Activated CD8-positive, alpha-beta T cell treated with anti-CD3 and anti-CD28 coated beads, Interleukin-2, amount 10 ng/mL, durations not matched to agents 7 days and 5 days (primary cell): ENCODE measurements at regions of chr2 and their contacts with region 1.

Region 1: DNA sequence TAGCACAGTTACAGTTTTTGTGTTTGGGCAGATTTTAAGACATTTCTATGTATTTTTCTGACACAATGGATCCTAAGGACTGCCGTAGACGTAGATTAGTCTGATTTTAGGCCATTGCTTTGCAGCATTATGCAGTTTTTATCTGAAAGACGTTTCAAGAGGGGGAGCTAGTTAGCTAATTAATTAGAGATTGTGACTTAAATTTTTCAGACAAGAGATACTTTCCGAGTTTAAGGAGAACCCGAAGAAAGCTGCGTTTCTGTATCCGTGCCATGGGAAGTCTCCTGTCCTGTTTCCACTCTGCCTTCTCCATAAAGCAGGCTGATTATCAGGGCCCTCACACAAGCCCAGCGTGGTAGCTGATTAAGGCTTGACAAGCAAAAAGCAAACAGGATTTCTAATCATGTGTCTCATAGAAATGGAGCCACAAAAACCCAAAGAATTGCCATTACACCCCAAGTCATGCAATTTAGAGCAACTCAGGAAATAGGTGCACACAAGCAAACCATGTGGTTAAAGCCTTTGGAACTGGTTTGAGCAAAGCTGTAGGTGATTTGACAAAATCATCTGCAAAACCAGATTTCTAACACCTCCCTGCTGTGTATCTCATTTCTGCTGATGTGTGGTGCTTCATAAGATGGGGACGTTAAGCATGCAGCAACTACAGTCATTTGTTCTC is 808.1 kb downstream of the RNF144A start:
- DNase-seq: peak; percentile 80
- ATAC-seq: peak; percentile 83
- H3K4me3 Mint-ChIP-seq: peak overlapping the region; percentile 76
- H3K27ac Mint-ChIP-seq: peak overlapping the region; percentile 86
- H3K4me1 Mint-ChIP-seq: peaks cover 60% of the 10 kb centered on the region
- H3K27me3 Mint-ChIP-seq: no peaks in the 10 kb centered on the region

Region 2: DNA sequence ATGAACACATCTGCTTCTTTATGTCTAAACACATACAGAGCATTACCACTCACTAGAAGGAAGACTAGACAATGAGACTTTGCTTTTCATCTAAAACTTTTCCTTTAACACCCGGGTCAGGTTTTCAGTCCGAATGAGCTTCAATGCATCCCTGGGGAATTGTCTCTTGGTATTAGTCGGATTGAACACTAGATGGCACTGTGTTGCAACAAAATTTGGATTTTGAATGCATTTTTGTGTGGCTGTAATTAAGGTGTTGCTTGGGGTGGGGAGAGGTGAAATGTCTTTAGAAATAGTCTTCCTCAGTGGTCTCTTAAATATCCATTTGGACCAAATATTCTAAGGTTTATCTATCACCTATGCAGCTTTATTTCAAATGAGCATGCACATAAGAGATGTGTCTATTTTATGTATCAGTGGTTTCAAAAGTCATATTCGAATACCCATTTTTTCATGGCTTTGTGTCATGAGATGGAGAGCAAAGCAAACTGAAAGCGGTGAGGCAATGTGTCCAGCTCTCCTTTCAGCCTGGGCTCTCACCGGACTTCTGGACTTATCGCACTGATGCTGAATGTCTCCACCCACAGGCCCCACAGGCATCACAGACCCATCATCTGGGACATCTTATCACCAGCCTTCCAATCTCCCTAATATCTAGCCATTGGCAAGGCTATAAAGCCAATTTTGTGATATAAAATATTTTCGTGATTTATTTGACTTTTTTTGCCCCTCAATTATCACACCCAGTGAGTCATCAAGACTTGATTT is 297.8 kb before region 1 on chr2:
- CTCF ChIA-PET with region 1: interaction called, 44 read pairs
- POLR2A ChIA-PET with region 1: interaction called, 40 read pairs
- DNase-seq: peak; percentile 59
- ATAC-seq: no peak
- H3K4me3 Mint-ChIP-seq: no peak overlapping the region
- H3K27ac Mint-ChIP-seq: peak overlapping the region; percentile 68
- H3K4me1 Mint-ChIP-seq: peaks cover 46% of the 10 kb centered on the region
- H3K27me3 Mint-ChIP-seq: no peaks in the 10 kb centered on the region

Region 3: GRCh38 chr2:7450188-7450832 is 275.0 kb before region 1 on chr2:
- CTCF ChIA-PET with region 1: interaction called, 4 read pairs
- POLR2A ChIA-PET with region 1: interaction called, 71 read pairs
- DNase-seq: peak; percentile 67
- ATAC-seq: peak; percentile 58
- H3K4me3 Mint-ChIP-seq: peak overlapping the region; percentile 43
- H3K27ac Mint-ChIP-seq: peak overlapping the region; percentile 97
- H3K4me1 Mint-ChIP-seq: peaks cover 88% of the 10 kb centered on the region
- H3K27me3 Mint-ChIP-seq: no peaks in the 10 kb centered on the region

Region 4: GRCh38 chr2:7593360-7593759 is 131.9 kb before region 1 on chr2:
- CTCF ChIA-PET with region 1: interaction called, 17 read pairs
- POLR2A ChIA-PET with region 1: interaction called, 9 read pairs
- DNase-seq: no peak
- ATAC-seq: no peak
- H3K4me3 Mint-ChIP-seq: no peak overlapping the region
- H3K27ac Mint-ChIP-seq: no peak overlapping the region
- H3K4me1 Mint-ChIP-seq: peaks cover 17% of the 10 kb centered on the region
- H3K27me3 Mint-ChIP-seq: no peaks in the 10 kb centered on the region

Region 5: GRCh38 chr2:7692657-7693161 is 32.6 kb before region 1 on chr2:
- CTCF ChIA-PET with region 1: no interaction called
- POLR2A ChIA-PET with region 1: interaction called, 14 read pairs
- DNase-seq: no peak
- ATAC-seq: no peak
- H3K4me3 Mint-ChIP-seq: no peak overlapping the region
- H3K27ac Mint-ChIP-seq: peak overlapping the region; percentile 36
- H3K4me1 Mint-ChIP-seq: peaks cover 36% of the 10 kb centered on the region
- H3K27me3 Mint-ChIP-seq: no peaks in the 10 kb centered on the region

Region 6: DNA sequence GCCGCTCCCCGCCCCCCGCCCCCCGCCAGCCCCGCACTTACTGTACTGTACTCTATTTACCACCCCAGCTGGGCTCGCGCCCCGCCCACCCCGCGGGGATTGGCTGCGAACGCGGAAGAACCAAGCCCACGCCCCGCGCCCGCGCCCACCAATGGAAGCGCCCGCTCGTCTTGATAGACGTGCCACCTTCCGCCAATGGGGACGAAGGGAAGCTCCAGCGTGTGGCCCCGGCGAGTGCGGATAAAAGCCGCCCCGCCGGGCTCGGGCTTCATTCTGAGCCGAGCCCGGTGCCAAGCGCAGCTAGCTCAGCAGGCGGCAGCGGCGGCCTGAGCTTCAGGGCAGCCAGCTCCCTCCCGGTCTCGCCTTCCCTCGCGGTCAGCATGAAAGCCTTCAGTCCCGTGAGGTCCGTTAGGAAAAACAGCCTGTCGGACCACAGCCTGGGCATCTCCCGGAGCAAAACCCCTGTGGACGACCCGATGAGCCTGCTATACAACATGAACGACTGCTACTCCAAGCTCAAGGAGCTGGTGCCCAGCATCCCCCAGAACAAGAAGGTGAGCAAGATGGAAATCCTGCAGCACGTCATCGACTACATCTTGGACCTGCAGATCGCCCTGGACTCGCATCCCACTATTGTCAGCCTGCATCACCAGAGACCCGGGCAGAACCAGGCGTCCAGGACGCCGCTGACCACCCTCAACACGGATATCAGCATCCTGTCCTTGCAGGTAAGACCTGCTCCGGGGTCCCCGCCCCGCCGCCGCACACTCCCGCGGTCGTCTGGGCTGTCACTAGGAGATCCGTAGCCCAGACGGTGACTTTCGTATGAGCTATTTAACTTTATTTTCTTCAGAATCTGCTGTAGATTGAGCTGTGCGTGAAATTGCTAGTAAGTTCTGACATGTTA is 956.7 kb after region 1 on chr2 and contains the start of gene ID2:
- CTCF ChIA-PET with region 1: interaction called, 3 read pairs
- POLR2A ChIA-PET with region 1: interaction called, 86 read pairs
- DNase-seq: peak; percentile 99
- ATAC-seq: peak; percentile 68
- H3K4me3 Mint-ChIP-seq: peak within 1 kb of the TSS; percentile 99
- H3K27ac Mint-ChIP-seq: peak within 1 kb of the TSS; percentile 97
- H3K4me1 Mint-ChIP-seq: peaks cover 39% of the 10 kb centered on the region
- H3K27me3 Mint-ChIP-seq: peaks cover 11% of the 10 kb centered on the region
- total RNA-seq, gene ID2: 257 to 263 TPM